ENCODE measurements at regions of chr6 and their contacts with region 1.

Region 1: DNA sequence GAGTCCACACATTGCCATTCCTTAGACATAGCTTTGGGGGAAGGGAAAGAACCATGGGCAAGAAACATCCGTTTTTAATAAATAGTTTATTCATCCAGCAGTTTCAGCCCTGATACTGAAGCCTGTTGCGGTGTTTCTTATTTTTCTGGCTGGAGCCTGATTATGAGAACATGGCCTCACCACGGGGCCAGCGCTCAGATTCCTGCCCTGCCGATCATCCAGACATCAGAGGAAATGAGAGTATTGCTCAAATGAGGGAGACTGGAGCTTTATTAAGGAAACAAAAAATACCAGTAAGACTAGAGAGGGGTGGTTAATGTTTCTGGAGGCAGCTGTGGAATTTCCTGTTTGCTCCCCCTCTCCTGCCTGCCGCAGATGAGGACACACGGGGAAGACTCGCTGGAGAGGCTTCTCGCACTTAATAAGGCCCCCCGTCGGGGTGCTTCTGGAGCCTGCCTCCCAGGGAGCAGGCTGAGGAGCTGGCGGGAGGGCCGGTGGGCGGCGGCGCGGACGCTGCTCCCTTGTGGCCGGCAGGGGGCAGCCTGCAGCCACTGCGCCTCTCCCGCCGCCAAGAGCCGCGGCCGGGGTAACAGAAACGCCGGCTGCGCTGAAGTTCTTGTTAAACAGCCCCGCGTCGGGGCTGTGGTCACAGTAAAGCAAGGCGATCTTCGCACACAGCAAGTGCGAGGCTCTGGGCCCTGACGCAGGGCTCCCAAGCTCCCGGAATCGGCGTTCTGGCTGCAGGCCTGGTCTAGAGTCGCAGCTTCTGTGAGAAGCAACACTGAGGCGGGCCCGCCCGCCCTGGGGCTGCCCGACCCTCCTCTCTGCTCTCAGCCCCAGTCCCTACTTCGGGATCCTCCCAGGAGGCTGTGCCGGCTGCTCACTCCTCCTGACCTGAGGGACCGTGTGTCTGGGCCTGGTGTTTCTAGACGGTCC is 17.5 kb downstream of the LEMD2 start:
- DNase-seq: peak; percentile 86
- ATAC-seq: peak; percentile 80

Region 2: DNA sequence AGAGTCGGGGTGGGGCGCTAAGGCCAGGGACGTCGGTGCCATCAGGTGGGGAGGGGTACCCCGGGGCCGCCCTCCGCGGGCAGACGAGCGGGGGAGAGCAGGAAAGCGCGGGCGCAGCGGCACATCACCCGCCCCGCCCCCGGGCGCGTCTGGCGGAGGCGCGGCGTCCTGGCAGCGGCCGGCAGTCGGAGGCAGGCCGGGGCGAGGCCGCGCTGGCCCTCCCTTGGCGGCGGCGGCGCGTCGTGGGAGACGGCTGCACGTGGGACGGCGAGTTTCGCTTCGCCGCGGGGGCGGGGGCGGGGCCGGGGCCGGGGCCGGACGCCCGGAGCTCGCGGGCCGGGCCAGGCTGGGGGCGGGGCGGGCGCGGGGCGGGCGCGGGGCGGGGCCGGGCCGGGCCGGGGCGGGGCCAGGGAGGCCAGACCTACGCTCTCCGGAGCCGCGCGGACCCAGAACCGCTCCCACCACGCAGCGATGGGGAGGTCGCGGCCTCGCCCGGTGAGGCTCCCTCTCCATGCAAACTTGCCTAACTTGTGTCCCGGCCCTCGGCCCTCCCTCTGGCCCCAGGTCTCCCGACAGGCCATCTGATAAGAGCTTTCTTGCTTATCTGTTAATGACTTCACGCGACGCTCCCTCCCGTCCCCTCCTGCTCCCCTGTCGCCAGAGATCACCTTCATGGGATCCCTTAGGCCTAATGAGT is 137.8 kb before region 1 on chr6:
- intact Hi-C with region 1: no loop called
- DNase-seq: peak; percentile 86
- ATAC-seq: peak; percentile 85

Region 3: GRCh38 chr6:34027445-34027936 is 256.1 kb after region 1 on chr6:
- intact Hi-C with region 1: loop called (anchors 2 kb)
- DNase-seq: no peak
- ATAC-seq: peak; percentile 46

Region 4: DNA sequence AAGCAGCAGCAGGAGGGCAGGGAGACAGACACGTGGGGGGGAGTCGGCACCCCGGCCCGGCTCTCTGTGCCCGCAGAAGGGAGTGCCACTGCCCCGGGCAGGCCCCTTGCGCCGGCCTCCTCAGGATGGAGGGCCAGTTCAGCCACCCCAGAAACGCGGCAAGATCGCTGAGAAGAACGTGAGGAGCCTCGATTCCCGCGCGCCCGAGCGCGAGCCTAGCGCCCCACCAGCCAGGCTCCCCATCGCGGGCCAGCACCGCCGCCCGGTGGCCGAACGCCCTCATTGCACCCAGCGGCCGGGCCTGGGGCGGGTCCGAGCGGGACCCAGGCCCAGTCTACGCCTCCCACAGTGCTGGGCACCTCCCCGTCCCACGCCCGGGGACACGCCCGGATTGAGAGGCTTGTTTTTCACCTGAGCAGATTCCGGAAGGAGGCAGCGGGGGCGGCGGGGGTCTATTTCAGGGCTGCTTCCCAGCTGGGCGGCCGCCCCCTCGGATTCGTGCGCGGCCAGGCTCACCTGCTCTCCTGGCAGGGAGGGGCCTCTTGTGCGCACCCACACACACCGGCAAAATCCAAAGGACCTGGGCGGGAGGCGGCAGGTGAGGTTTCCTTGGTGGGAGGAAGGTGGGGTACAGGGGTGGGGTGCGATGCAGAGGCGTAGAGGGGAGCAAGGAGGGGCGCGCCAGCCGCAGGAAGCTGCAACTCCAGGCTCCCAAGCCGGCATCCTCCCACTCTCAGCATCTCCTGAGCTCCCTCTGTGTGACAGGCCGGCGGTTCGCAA is 383.4 kb after region 1 on chr6:
- intact Hi-C with region 1: loop called (anchors 1 kb)
- DNase-seq: no peak
- ATAC-seq: peak; percentile 63

Region 5: DNA sequence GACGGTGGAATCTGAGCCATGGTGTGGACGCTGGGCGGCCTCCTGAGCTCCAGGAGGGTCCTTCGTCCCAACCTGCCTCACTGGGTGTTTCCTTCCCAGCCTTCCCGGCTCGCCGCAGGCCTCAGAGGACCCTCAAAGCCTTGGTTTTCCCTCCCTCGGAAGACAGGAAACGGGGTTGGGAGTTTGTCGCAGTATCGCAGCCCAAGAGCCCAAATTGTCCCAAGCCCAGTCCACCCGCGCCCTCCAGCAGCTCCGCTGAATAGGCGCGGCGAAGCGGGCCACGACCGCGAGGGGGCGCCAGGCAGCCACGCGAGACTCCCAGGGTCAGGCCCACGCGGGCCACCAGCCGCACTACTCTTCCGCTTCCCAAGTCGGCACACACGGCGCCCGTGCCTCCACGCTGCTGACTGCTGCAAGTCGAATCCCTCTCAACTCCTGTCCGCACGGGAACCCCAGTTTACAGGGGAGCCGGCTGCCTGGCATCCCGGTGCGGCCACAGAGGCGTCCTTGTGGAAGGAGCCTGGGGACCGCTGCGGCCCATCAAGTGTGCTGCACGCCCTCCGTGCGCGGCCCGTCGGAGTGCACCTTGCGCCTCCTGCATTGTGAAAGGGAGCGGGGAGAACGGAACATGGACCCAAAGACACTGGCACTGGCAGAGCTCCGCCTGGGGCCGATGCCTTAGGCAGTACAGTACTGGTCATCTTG is 424.9 kb after region 1 on chr6:
- intact Hi-C with region 1: no loop called
- DNase-seq: peak; percentile 97
- ATAC-seq: peak; percentile 99